Activated CD8-positive, alpha-beta T cell treated with anti-CD3 and anti-CD28 coated beads for 36 hours (primary cell): ENCODE measurements at regions of chr11 and their contacts with region 1.

Region 1: DNA sequence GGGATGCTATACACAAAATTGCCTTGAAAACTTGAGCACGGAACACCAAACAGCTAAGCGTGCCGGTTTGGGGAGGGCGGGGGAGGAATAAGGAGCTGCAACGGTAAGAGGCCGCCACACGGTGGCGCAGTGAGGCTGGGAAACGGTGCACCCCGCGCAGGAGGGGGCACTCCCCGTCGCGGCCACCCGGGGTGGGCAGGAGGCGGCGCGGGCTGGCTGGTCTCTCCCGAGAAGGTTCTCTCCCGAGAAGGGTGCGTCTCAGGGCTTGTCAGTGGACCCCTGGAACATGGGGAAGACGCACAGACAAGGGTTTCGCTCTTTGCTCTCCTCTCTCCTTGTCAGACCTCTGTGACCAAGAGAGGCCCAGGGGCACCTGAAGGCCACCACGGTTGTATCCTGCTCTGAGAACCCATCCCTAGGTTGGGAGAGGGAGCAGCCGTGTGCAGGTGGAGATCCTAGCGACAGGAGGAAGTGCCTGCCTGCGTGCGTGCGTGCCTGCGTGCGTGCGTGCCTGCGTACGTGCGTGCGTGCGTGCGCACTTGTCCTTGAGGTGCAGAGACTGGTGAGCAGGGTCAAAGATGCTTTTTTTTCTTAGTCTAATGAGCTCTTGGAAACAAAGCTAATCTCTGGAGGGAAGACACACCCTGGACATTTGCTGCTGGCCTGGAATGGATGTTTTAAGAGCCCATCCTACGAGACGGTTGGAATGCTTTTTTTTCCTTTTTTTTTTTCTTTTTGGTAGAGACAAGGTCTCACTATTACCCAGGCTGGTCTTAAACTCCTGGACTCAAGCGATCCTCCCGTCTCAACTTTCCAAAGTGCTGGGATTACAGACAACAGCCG is 18.1 kb upstream of the JAM3 start:
- DNase-seq: peak; percentile 80
- ATAC-seq: peak; percentile 91
- H3K4me3 Mint-ChIP-seq: no peak overlapping the region
- H3K27ac Mint-ChIP-seq: no peak overlapping the region
- H3K4me1 Mint-ChIP-seq: peaks cover 11% of the 10 kb centered on the region
- H3K27me3 Mint-ChIP-seq: peaks cover 8% of the 10 kb centered on the region
- CTCF ChIP-seq: peak; percentile 98

Region 2: GRCh38 chr11:133927690-133928627 is 122.8 kb before region 1 on chr11:
- CTCF ChIA-PET with region 1: interaction called, 17 read pairs
- POLR2A ChIA-PET with region 1: interaction called, 6 read pairs
- intact Hi-C with region 1: no loop called
- DNase-seq: peak; percentile 70
- ATAC-seq: peak; percentile 44
- H3K4me3 Mint-ChIP-seq: peak overlapping the region; percentile 62
- H3K27ac Mint-ChIP-seq: peak overlapping the region; percentile 90
- H3K4me1 Mint-ChIP-seq: peaks cover 38% of the 10 kb centered on the region
- H3K27me3 Mint-ChIP-seq: no peaks in the 10 kb centered on the region
- CTCF ChIP-seq: peak; percentile 80

Region 3: GRCh38 chr11:134033696-134034491 is 16.9 kb before region 1 on chr11:
- CTCF ChIA-PET with region 1: interaction called, 20 read pairs
- POLR2A ChIA-PET with region 1: interaction called, 3 read pairs
- intact Hi-C with region 1: no loop called
- DNase-seq: peak; percentile 87
- ATAC-seq: peak; percentile 90
- H3K4me3 Mint-ChIP-seq: peak overlapping the region; percentile 50
- H3K27ac Mint-ChIP-seq: peak overlapping the region; percentile 69
- H3K4me1 Mint-ChIP-seq: peaks cover 60% of the 10 kb centered on the region
- H3K27me3 Mint-ChIP-seq: no peaks in the 10 kb centered on the region
- CTCF ChIP-seq: no peak

Region 4: DNA sequence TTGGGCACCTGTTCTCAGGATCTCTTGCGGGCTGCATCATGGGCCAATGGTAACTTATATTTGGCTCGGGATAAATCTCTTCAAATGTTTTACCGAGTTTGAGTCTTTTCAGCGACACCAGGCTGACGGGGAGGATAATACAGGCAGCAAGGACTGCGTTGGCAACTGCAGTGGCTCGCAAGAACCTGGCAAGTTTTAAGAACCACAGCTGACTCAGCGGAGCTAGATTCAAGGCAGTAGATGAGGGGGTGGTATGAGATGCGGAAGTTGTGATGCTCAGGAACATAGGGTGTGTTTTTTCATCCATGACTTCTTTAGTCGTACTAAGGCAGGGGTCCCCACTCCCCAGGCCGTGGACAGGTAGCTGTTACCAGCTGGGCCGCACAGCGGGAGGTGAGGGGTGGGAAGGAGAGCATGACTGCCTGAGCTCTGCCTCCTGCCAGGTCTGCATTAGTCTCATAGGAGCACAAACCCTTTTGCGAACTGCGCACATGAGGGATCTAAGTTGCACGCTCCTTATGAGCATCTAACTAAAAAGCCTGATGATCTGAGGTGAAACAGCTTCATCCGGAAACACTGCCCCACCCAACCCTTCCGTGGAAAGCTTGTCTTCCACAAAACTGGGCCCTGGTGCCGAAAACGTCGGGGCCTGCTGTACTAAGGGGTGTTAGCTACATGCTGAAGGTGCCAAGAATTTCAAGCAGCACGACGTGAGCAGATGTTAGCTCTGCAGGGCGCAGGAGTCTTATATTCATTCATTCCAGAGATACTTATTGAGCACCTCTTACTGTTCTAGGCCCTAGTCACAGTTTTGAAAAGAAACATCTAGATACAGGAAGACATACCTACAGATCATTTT is 11.7 kb after region 1 on chr11:
- CTCF ChIA-PET with region 1: interaction called, 27 read pairs
- POLR2A ChIA-PET with region 1: interaction called, 3 read pairs
- intact Hi-C with region 1: no loop called
- DNase-seq: no peak
- ATAC-seq: no peak
- H3K4me3 Mint-ChIP-seq: no peak overlapping the region
- H3K27ac Mint-ChIP-seq: no peak overlapping the region
- H3K4me1 Mint-ChIP-seq: peaks cover 26% of the 10 kb centered on the region
- H3K27me3 Mint-ChIP-seq: peaks cover 32% of the 10 kb centered on the region
- CTCF ChIP-seq: no peak

Region 5: GRCh38 chr11:134098566-134099184 is 47.9 kb after region 1 on chr11:
- CTCF ChIA-PET with region 1: interaction called, 36 read pairs
- POLR2A ChIA-PET with region 1: no interaction called
- intact Hi-C with region 1: loop called (anchors 2 kb)
- DNase-seq: no peak
- ATAC-seq: peak; percentile 67
- H3K4me3 Mint-ChIP-seq: no peak overlapping the region
- H3K27ac Mint-ChIP-seq: no peak overlapping the region
- H3K4me1 Mint-ChIP-seq: peaks cover 2% of the 10 kb centered on the region
- H3K27me3 Mint-ChIP-seq: no peaks in the 10 kb centered on the region
- CTCF ChIP-seq: peak; percentile 19